Activated CD8-positive, alpha-beta T cell treated with anti-CD3 and anti-CD28 coated beads, Interleukin-2, amount 10 ng/mL, durations not matched to agents 7 days and 5 days (primary cell): ENCODE measurements at regions of chr14 and their contacts with region 1.

Region 1: GRCh38 chr14:30270200-30271161 is 288.5 kb upstream of the G2E3 start:
- DNase-seq: peak; percentile 68
- ATAC-seq: peak; percentile 94
- H3K4me3 Mint-ChIP-seq: no peak overlapping the region
- H3K27ac Mint-ChIP-seq: no peak overlapping the region
- H3K4me1 Mint-ChIP-seq: no peaks in the 10 kb centered on the region
- H3K27me3 Mint-ChIP-seq: no peaks in the 10 kb centered on the region

Region 2: GRCh38 chr14:30165255-30165654 is 105.2 kb before region 1 on chr14:
- CTCF ChIA-PET with region 1: no interaction called
- POLR2A ChIA-PET with region 1: no interaction called
- DNase-seq: no peak
- ATAC-seq: no peak
- H3K4me3 Mint-ChIP-seq: no peak overlapping the region
- H3K27ac Mint-ChIP-seq: no peak overlapping the region
- H3K4me1 Mint-ChIP-seq: no peaks in the 10 kb centered on the region
- H3K27me3 Mint-ChIP-seq: no peaks in the 10 kb centered on the region

Region 3: DNA sequence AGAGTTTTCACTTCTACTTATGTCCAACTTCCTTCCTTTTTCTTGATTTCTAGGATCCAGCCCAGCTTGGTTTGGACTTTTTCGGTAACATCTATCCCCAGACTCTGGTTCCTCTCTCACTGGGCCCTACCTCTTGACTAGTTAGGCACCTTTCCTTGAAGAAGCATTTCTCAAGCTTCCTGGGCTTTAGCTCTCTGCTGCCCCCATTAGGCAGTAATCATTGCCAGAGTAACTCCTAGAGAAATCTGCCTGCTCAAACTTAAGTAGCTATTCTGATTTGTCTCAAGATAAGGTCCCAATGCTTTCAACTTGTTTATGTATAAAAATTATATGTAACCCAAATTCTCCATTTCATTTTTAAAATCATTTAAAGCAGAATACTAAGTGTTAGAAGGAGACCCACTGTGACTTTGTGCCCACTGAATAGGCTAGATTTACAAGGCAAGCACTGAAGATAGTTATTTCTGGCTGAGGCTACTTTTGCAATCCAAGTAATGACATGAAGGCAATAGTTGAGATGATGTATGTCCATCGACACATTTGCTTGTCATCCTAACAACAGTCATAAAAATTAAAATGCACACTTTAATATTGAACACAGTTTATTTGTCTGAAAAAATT is 13.5 kb after region 1 on chr14:
- CTCF ChIA-PET with region 1: interaction called, 37 read pairs
- POLR2A ChIA-PET with region 1: no interaction called
- DNase-seq: peak; percentile 28
- ATAC-seq: no peak
- H3K4me3 Mint-ChIP-seq: no peak overlapping the region
- H3K27ac Mint-ChIP-seq: no peak overlapping the region
- H3K4me1 Mint-ChIP-seq: no peaks in the 10 kb centered on the region
- H3K27me3 Mint-ChIP-seq: no peaks in the 10 kb centered on the region

Region 4: GRCh38 chr14:30349520-30349919 is 79.0 kb after region 1 on chr14:
- CTCF ChIA-PET with region 1: no interaction called
- POLR2A ChIA-PET with region 1: no interaction called
- DNase-seq: no peak
- ATAC-seq: no peak
- H3K4me3 Mint-ChIP-seq: no peak overlapping the region
- H3K27ac Mint-ChIP-seq: no peak overlapping the region
- H3K4me1 Mint-ChIP-seq: no peaks in the 10 kb centered on the region
- H3K27me3 Mint-ChIP-seq: peaks cover 5% of the 10 kb centered on the region